ENCODE measurements at regions of chr11 and their contacts with region 1.

Region 1: DNA sequence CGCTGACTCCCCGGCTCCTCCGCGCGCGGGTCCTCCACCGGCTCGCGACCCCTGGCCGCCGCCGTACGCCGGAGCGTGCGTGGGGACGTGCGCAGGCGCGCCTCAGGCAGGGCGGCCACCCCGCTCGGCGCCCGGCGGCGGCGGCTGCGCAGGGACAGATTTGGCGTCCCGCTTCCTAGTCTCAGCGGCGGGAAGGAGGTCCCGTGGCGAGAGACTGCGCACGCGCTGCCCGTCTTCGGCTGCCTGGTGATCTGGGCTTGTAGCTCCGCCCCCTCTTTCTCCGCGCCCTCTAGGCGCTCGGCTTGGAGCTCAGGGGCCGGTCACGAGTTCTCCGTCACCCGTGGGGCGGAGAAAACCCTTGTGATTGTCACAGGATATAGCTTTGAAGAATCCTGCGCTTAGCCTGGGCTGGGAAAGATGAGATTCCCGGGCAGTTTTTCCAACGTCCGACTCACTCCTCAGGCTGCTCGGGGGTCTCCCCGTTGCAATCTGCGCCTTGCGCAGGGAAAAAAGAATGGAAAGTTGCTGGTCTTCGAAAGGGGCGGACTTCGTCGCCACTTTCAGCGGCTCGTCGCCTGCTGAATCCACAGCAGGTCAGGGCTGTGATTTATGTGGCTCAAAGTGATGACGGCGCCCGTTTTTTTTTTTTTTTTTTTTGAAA is at the start of gene PATL1:
- DNase-seq: peak; percentile 98 to 100 (median 99)
- H3K4me3 ChIP-seq: peak within 1 kb of the TSS; percentile 83 to 92
- H3K4me3 Mint-ChIP-seq: peak within 1 kb of the TSS; percentile 92 to 99 (median 96)
- H3K27ac ChIP-seq: peak within 1 kb of the TSS; percentile 99
- H3K27ac Mint-ChIP-seq: peak within 1 kb of the TSS; percentile 97 to 100 (median 100)
- H3K4me1 ChIP-seq: peaks cover 36% of the 10 kb centered on the region
- H3K4me1 Mint-ChIP-seq: peaks cover 29 to 50% (median 38%) of the 10 kb centered on the region in 4 donors
- H3K27me3 ChIP-seq: no peaks in the 10 kb centered on the region
- H3K27me3 Mint-ChIP-seq: no peaks in the 10 kb centered on the region
- total RNA-seq, gene PATL1: 45.3 to 45.5 TPM

Region 2: GRCh38 chr11:57712256-57713150 is 1956.6 kb before region 1 on chr11 and contains the start of gene TMX2:
- CTCF ChIA-PET with region 1: no interaction called
- POLR2A ChIA-PET with region 1: no interaction called
- intact Hi-C with region 1: loop called (anchors 2 kb)
- DNase-seq: peak; percentile 89 to 97 (median 94)
- H3K4me3 ChIP-seq: peak within 1 kb of the TSS; percentile 92 to 96
- H3K4me3 Mint-ChIP-seq: peak within 1 kb of the TSS; percentile 93 to 99 (median 98)
- H3K27ac ChIP-seq: peak within 1 kb of the TSS; percentile 96
- H3K27ac Mint-ChIP-seq: peak within 1 kb of the TSS; percentile 91 to 99 (median 98)
- H3K4me1 ChIP-seq: peaks cover 34% of the 10 kb centered on the region
- H3K4me1 Mint-ChIP-seq: peaks cover 30 to 64% (median 43%) of the 10 kb centered on the region in 4 donors
- H3K27me3 ChIP-seq: no peaks in the 10 kb centered on the region
- H3K27me3 Mint-ChIP-seq: no peaks in the 10 kb centered on the region
- total RNA-seq, gene TMX2: 63.6 to 67.1 TPM

Region 3: GRCh38 chr11:59550368-59550841 is 118.7 kb before region 1 on chr11:
- CTCF ChIA-PET with region 1: interaction called, 5 read pairs
- POLR2A ChIA-PET with region 1: interaction called, 6 read pairs
- intact Hi-C with region 1: loop called (anchors 1 kb)
- DNase-seq: peak; percentile 86 to 94 (median 87)
- H3K4me3 ChIP-seq: peak overlapping the region; percentile 19 to 61
- H3K4me3 Mint-ChIP-seq: peak overlapping the region; percentile 86 to 96 (median 88)
- H3K27ac ChIP-seq: peak overlapping the region; percentile 51
- H3K27ac Mint-ChIP-seq: peak overlapping the region; percentile 92 to 100 (median 94)
- H3K4me1 ChIP-seq: peaks cover 14% of the 10 kb centered on the region
- H3K4me1 Mint-ChIP-seq: peaks cover 16 to 52% (median 26%) of the 10 kb centered on the region in 4 donors
- H3K27me3 ChIP-seq: no peaks in the 10 kb centered on the region
- H3K27me3 Mint-ChIP-seq: peaks cover 0 to 9% of the 10 kb centered on the region in 2 donors

Region 4: DNA sequence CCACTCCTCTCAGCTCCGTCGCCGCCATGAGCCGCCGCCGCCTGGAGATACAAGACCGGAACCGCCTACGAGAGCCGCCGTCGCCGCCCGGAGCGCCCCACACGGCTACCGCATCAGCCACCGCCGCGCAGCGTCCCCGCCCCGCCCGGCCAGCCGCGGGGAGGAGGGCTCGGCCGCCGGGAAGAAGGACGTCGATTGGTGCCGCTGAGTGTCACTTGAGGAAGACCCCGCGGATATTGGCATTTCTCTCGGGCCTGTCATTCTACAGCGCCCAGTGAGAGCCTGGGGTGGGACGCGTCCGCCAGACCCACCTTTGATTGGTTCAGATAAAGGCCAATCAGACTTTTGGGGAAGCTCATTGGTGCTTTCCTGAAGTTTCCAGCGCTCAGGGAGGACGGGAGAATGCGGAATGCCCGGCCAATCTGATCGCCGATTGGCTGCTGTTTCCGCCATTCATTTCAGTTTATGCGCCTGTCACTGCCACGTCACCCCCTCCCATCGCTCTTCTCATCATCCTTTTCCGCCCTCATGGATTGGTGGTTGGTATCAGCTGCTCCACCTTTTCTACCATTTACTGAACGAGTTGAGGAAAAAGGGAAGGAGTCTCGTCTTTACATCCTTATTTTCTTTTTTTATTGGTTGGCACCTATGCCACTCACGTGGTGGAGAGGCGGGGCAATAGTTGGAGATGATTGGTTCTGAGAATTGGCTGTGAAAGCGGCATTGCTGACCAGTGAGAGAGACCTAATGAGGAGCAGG is 53.3 kb before region 1 on chr11 and contains the start of gene OSBP:
- CTCF ChIA-PET with region 1: interaction called, 12 read pairs
- POLR2A ChIA-PET with region 1: interaction called, 74 read pairs
- intact Hi-C with region 1: loop called (anchors 1 kb)
- DNase-seq: peak; percentile 98 to 100 (median 100)
- H3K4me3 ChIP-seq: peak within 1 kb of the TSS; percentile 84 to 86
- H3K4me3 Mint-ChIP-seq: peak within 1 kb of the TSS; percentile 93 to 99 (median 96)
- H3K27ac ChIP-seq: peak within 1 kb of the TSS; percentile 95
- H3K27ac Mint-ChIP-seq: peak within 1 kb of the TSS; percentile 83 to 99 (median 98)
- H3K4me1 ChIP-seq: peaks cover 48% of the 10 kb centered on the region
- H3K4me1 Mint-ChIP-seq: peaks cover 29 to 53% (median 42%) of the 10 kb centered on the region in 4 donors
- H3K27me3 ChIP-seq: no peaks in the 10 kb centered on the region
- H3K27me3 Mint-ChIP-seq: no peaks in the 10 kb centered on the region
- total RNA-seq, gene OSBP: 55.3 to 55.6 TPM

Region 5: GRCh38 chr11:59689015-59689414 is 19.9 kb after region 1 on chr11:
- CTCF ChIA-PET with region 1: no interaction called
- POLR2A ChIA-PET with region 1: no interaction called
- intact Hi-C with region 1: no loop called
- DNase-seq: no peak
- H3K4me3 ChIP-seq: no peak overlapping the region
- H3K4me3 Mint-ChIP-seq: no peak overlapping the region
- H3K27ac ChIP-seq: no peak overlapping the region
- H3K27ac Mint-ChIP-seq: no peak overlapping the region
- H3K4me1 ChIP-seq: no peaks in the 10 kb centered on the region
- H3K4me1 Mint-ChIP-seq: peaks cover 0 to 3% (median 0%) of the 10 kb centered on the region in 4 donors
- H3K27me3 ChIP-seq: no peaks in the 10 kb centered on the region
- H3K27me3 Mint-ChIP-seq: peaks cover 11 to 18% of the 10 kb centered on the region in 2 donors

Region 6: DNA sequence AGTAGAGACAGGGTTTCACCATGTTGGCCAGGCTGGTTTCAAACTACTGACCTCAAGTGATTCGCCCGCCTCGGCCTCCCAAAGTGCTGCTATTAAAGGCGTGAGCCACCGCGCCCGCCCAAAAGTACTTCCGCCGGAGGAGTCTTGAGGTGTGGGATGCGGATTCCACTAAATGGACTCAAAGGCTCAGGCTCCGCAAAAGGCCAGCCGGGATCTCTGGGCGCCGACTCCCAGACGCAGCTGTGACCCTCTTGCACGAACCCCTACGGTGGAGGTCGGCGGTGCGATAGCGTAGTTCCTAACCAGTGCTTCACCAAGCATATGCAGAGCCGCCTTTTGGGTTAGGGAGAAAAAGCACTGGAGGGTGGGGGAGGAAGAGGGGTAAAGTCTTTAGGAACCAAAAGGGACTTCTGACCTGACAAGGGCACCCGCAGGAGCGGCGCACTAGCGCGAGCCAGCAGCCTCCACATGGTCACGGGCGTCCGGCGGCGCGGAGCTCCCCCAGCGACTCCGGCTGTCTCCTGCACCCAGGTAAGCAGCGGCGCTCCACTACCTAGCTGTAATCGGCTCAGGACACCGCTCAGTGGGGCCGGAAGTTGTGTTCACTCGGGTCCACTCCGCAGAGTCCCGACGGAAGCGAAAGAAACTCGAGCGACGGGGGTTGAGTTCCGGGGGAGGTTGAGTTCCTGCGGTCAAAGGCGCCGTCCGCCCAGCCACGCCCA is 141.3 kb after region 1 on chr11 and contains the start of gene MRPL16:
- CTCF ChIA-PET with region 1: interaction called, 7 read pairs
- POLR2A ChIA-PET with region 1: interaction called, 21 read pairs
- intact Hi-C with region 1: loop called (anchors 1 kb)
- DNase-seq: peak; percentile 84 to 91 (median 86)
- H3K4me3 ChIP-seq: peak within 1 kb of the TSS; percentile 70 to 91
- H3K4me3 Mint-ChIP-seq: peak within 1 kb of the TSS; percentile 92 to 95 (median 93)
- H3K27ac ChIP-seq: peak within 1 kb of the TSS; percentile 71
- H3K27ac Mint-ChIP-seq: peak within 1 kb of the TSS; percentile 87 to 97 (median 91)
- H3K4me1 ChIP-seq: peaks cover 23% of the 10 kb centered on the region
- H3K4me1 Mint-ChIP-seq: peaks cover 14 to 32% (median 23%) of the 10 kb centered on the region in 4 donors
- H3K27me3 ChIP-seq: no peaks in the 10 kb centered on the region
- H3K27me3 Mint-ChIP-seq: peaks cover 0 to 2% of the 10 kb centered on the region in 2 donors
- total RNA-seq, gene MRPL16: 33.2 to 35.9 TPM